ENCODE measurements at regions of chr3 and their contacts with region 1.

Region 1: GRCh38 chr3:123028233-123028828 is 768 bp upstream of the SEMA5B start:
- DNase-seq: peak; percentile 19
- ATAC-seq: peak; percentile 50
- H3K4me3 Mint-ChIP-seq: peak overlapping the region; percentile 83
- H3K27ac Mint-ChIP-seq: no peak overlapping the region
- H3K4me1 Mint-ChIP-seq: peaks cover 19% of the 10 kb centered on the region
- H3K27me3 Mint-ChIP-seq: peaks cover 37% of the 10 kb centered on the region
- CTCF ChIP-seq: no peak

Region 2: GRCh38 chr3:122227036-122227781 is 801.1 kb before region 1 on chr3:
- CTCF ChIA-PET with region 1: no interaction called
- POLR2A ChIA-PET with region 1: no interaction called
- intact Hi-C with region 1: no loop called
- DNase-seq: no peak
- ATAC-seq: no peak
- H3K4me3 Mint-ChIP-seq: no peak overlapping the region
- H3K27ac Mint-ChIP-seq: no peak overlapping the region
- H3K4me1 Mint-ChIP-seq: peaks cover 2% of the 10 kb centered on the region
- H3K27me3 Mint-ChIP-seq: no peaks in the 10 kb centered on the region
- CTCF ChIP-seq: no peak

Region 3: GRCh38 chr3:122458992-122459391 is 569.3 kb before region 1 on chr3:
- CTCF ChIA-PET with region 1: no interaction called
- POLR2A ChIA-PET with region 1: no interaction called
- intact Hi-C with region 1: loop called (anchors 5 kb)
- DNase-seq: no peak
- ATAC-seq: no peak
- H3K4me3 Mint-ChIP-seq: no peak overlapping the region
- H3K27ac Mint-ChIP-seq: no peak overlapping the region
- H3K4me1 Mint-ChIP-seq: peaks cover 10% of the 10 kb centered on the region
- H3K27me3 Mint-ChIP-seq: no peaks in the 10 kb centered on the region
- CTCF ChIP-seq: no peak

Region 4: GRCh38 chr3:122858373-122858772 is 170.0 kb before region 1 on chr3:
- CTCF ChIA-PET with region 1: interaction called, 8 read pairs
- POLR2A ChIA-PET with region 1: no interaction called
- intact Hi-C with region 1: loop called (anchors 1 kb)
- DNase-seq: no peak
- ATAC-seq: no peak
- H3K4me3 Mint-ChIP-seq: no peak overlapping the region
- H3K27ac Mint-ChIP-seq: no peak overlapping the region
- H3K4me1 Mint-ChIP-seq: no peaks in the 10 kb centered on the region
- H3K27me3 Mint-ChIP-seq: no peaks in the 10 kb centered on the region
- CTCF ChIP-seq: no peak

Region 5: GRCh38 chr3:122942937-122943827 is 85.1 kb before region 1 on chr3:
- CTCF ChIA-PET with region 1: interaction called, 41 read pairs
- POLR2A ChIA-PET with region 1: no interaction called
- intact Hi-C with region 1: loop called (anchors 1 kb)
- DNase-seq: peak; percentile 38
- ATAC-seq: peak; percentile 59
- H3K4me3 Mint-ChIP-seq: no peak overlapping the region
- H3K27ac Mint-ChIP-seq: no peak overlapping the region
- H3K4me1 Mint-ChIP-seq: peaks cover 27% of the 10 kb centered on the region
- H3K27me3 Mint-ChIP-seq: no peaks in the 10 kb centered on the region
- CTCF ChIP-seq: no peak

Region 6: GRCh38 chr3:123344175-123344906 is 316.0 kb after region 1 on chr3:
- CTCF ChIA-PET with region 1: no interaction called
- POLR2A ChIA-PET with region 1: no interaction called
- intact Hi-C with region 1: no loop called
- DNase-seq: no peak
- ATAC-seq: no peak
- H3K4me3 Mint-ChIP-seq: no peak overlapping the region
- H3K27ac Mint-ChIP-seq: no peak overlapping the region
- H3K4me1 Mint-ChIP-seq: no peaks in the 10 kb centered on the region
- H3K27me3 Mint-ChIP-seq: peaks cover 11% of the 10 kb centered on the region
- CTCF ChIP-seq: no peak